Tibial artery (tissue), 4 donors: ENCODE measurements at regions of chr9 and their contacts with region 1.

Region 1: DNA sequence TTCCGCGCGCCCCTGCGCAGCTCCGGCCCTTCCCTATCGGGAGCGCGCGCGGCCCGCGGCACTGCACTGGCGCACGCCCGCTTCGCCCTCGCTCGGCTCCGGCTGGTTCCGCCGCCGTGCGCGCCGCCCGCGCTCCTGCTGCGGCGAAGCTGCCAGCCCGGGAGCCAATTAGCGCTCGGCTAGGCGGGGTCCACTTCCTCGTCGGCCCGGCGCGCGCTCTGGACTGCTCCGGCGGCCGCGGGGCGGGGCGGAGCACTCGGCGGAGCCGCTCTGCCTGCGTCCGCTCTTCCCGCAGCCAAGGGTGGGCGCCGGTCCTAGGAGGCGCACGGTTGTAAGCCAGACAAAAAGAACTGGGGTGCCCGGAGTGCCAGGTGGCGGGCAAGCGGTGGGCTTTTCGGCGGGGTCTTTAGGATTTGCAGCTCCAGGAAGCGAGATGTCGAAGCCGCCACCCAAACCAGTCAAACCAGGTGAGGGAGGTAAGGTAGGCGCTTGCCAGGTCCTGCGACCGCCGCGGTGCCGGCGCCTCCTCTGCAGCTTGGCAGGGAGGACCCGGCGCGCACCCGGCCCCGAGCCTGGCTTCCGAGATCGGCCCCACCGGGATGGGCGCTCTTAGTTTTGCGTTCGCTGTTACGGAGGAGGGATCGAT is at the start of gene OSTF1:
- DNase-seq: peak; percentile 93 to 97
- H3K4me3 ChIP-seq: peak within 1 kb of the TSS; percentile 84 to 89
- H3K27ac ChIP-seq: peak within 1 kb of the TSS; percentile 96 to 97
- H3K4me1 ChIP-seq: peaks cover 0 to 55% (median 29%) of the 10 kb centered on the region in 4 donors
- H3K27me3 ChIP-seq: no peaks in the 10 kb centered on the region
- CTCF ChIP-seq: no peak

Region 2: GRCh38 chr9:73761905-73762304 is 1326.5 kb before region 1 on chr9:
- intact Hi-C with region 1: no loop called
- DNase-seq: no peak
- H3K4me3 ChIP-seq: no peak overlapping the region
- H3K27ac ChIP-seq: no peak overlapping the region
- H3K4me1 ChIP-seq: no peaks in the 10 kb centered on the region
- H3K27me3 ChIP-seq: no peaks in the 10 kb centered on the region
- CTCF ChIP-seq: no peak

Region 3: DNA sequence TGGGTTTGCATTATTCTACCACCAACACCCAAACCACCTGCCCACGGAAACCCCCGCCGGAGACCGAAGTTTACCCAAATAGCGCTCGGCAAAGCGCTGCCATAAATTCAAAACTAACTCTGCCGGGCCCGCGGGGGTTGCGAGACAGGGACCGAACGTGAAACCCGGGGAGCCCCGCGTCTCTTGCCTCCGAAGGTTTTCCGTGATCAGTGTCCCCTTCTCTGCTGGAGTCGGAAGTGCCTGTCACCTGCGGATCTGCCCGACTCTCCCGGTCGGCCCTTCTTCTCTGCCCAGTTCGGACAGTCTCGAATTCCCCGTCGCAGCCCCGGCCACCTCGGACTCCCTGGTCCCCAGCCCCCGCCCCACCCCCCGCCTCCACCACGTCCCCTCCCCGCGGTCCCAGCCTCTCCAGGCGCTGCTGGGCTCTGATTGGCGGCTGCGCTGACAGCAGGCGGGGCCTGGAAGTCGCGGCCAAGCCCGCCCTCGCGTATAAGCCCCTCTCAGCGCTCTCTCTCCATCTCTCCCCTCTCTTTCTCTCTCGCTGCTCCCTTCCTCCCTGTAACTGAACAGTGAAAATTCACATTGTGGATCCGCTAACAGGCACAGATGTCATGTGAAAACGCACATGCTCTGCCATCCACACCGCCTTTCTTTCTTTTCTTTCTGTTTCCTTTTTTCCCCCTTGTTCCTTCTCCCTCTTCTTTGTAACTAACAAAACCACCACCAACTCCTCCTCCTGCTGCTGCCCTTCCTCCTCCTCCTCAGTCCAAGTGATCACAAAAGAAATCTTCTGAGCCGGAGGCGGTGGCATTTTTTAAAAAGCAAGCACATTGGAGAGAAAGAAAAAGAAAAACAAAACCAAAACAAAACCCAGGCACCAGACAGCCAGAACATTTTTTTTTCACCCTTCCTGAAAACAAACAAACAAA is 591.3 kb before region 1 on chr9 and contains the start of gene RORB:
- intact Hi-C with region 1: loop called (anchors 10 kb)
- DNase-seq: peak; percentile 37 to 82
- H3K4me3 ChIP-seq: peak within 1 kb of the TSS; percentile 56 to 64
- H3K27ac ChIP-seq: peak within 1 kb of the TSS; percentile 28 to 41
- H3K4me1 ChIP-seq: peaks cover 0 to 29% (median 19%) of the 10 kb centered on the region in 4 donors
- H3K27me3 ChIP-seq: peaks cover 0 to 28% of the 10 kb centered on the region in 2 donors
- CTCF ChIP-seq: no peak

Region 4: GRCh38 chr9:74952281-74953151 is 135.9 kb before region 1 on chr9 and contains the start of gene C9orf40:
- intact Hi-C with region 1: loop called (anchors 5 kb)
- DNase-seq: peak; percentile 85 to 92
- H3K4me3 ChIP-seq: peak within 1 kb of the TSS; percentile 89 to 93
- H3K27ac ChIP-seq: peak within 1 kb of the TSS; percentile 98
- H3K4me1 ChIP-seq: peaks cover 0 to 7% (median 3%) of the 10 kb centered on the region in 4 donors
- H3K27me3 ChIP-seq: no peaks in the 10 kb centered on the region
- CTCF ChIP-seq: peak; percentile 78 to 83

Region 5: GRCh38 chr9:75148561-75148960 is 60.2 kb after region 1 on chr9:
- intact Hi-C with region 1: no loop called
- DNase-seq: no peak
- H3K4me3 ChIP-seq: no peak overlapping the region
- H3K27ac ChIP-seq: no peak overlapping the region
- H3K4me1 ChIP-seq: peaks cover 0 to 5% (median 0%) of the 10 kb centered on the region in 4 donors
- H3K27me3 ChIP-seq: no peaks in the 10 kb centered on the region
- CTCF ChIP-seq: no peak

Region 6: DNA sequence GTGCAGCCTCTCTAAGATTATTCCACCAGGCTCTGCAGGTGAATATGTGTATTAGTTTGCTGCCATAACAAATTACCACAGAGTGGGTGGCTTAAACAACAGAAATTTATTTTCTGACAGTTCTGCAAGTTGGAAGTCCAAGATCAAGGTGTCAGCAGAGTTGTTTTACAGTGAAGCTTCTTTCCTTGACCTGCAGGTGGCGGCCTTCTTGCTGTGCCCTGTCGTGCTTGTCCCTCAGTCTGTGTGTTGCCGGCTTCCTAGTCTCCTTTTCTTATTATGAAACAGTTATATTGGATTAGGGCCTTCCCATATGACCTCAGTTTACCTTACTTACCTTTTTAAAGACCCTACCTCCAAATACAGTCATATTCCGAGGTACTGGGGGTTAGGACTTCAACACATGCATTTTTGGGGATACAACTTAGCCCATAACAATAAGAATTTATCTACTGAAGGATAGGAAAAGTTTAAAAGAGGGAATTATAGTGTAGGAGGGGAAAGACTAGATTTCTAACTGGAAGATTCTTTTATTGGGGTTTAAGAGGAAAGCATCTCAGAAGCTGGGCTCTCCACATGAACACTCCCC is 97.3 kb after region 1 on chr9:
- intact Hi-C with region 1: no loop called
- DNase-seq: no peak
- H3K4me3 ChIP-seq: no peak overlapping the region
- H3K27ac ChIP-seq: no peak overlapping the region
- H3K4me1 ChIP-seq: no peaks in the 10 kb centered on the region
- H3K27me3 ChIP-seq: no peaks in the 10 kb centered on the region
- CTCF ChIP-seq: peak; percentile 20 to 46

Region 7: GRCh38 chr9:75238311-75238978 is 150.1 kb after region 1 on chr9:
- intact Hi-C with region 1: loop called (anchors 5 kb)
- DNase-seq: no peak
- H3K4me3 ChIP-seq: no peak overlapping the region
- H3K27ac ChIP-seq: no peak overlapping the region
- H3K4me1 ChIP-seq: peaks cover 0 to 6% (median 2%) of the 10 kb centered on the region in 4 donors
- H3K27me3 ChIP-seq: no peaks in the 10 kb centered on the region
- CTCF ChIP-seq: peak; percentile 79 to 86